IMR-90 (cell line): ENCODE measurements at regions of chr11 and their contacts with region 1.

Region 1: DNA sequence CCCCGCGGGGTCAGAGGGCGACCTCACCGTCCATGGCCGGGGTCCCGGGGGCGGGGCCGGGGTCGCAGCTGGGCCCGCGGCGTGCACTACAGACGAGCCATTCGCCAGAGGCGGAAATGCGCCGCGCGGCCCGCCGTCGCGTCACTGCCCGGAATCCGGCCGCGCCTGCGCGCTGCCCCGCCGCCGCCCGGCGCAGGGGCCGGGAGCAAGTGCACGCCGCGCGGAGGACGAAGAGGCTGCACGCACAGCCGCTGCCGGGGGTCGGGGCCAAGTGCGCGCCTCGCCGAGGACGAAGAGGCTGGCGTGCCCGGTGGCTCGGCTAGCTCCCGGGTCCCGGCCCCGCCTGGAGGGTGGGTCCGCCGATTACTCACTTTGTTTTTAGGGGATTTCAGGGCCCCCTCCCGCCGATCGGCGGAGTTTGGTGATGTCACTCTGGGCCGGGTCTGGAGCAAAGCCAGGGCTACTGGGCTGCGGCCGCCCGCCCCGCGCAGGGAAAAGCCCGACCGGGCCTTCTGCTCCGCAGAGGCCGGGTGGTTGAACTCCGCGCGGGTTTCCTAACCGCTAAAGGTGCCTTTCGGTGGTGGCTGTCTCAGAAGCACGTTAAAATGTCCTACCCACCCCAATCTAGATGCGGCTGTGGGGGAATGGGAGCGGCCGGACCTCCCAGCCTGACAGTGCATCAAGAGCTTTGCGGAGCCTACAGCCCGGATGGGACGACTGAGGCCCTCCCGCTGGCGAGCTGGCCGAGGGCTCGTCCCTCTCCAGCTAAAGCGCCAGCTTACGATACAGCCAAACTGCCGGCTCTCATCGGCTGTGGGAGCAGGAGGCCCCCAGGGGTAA is at the start of gene RELA:
- DNase-seq: peak; percentile 93
- ATAC-seq: peak; percentile 93
- H3K4me3 ChIP-seq: peak within 1 kb of the TSS; percentile 92
- H3K27ac ChIP-seq: peak within 1 kb of the TSS; percentile 91
- H3K4me1 ChIP-seq: peaks cover 7% of the 10 kb centered on the region
- H3K27me3 ChIP-seq: no peaks in the 10 kb centered on the region
- CTCF ChIP-seq: no peak
- POLR2A ChIP-seq: peak; percentile 83
- RAD21 ChIP-seq: no peak
- total RNA-seq, gene RELA: 8.6 and 8.9 TPM in 2 replicates

Region 2: GRCh38 chr11:65644006-65644405 is 19.0 kb before region 1 on chr11:
- CTCF ChIA-PET with region 1: no interaction called
- POLR2A ChIA-PET with region 1: no interaction called
- dilution Hi-C with region 1: no loop called
- in situ Hi-C with region 1: no loop called
- intact Hi-C with region 1: no loop called
- DNase-seq: no peak
- ATAC-seq: no peak
- H3K4me3 ChIP-seq: no peak overlapping the region
- H3K27ac ChIP-seq: no peak overlapping the region
- H3K4me1 ChIP-seq: peaks cover 8% of the 10 kb centered on the region
- H3K27me3 ChIP-seq: no peaks in the 10 kb centered on the region
- CTCF ChIP-seq: no peak
- POLR2A ChIP-seq: no peak
- RAD21 ChIP-seq: no peak

Region 3: GRCh38 chr11:66035653-66036333 is 372.8 kb after region 1 on chr11:
- CTCF ChIA-PET with region 1: no interaction called
- POLR2A ChIA-PET with region 1: interaction called, 17 read pairs
- dilution Hi-C with region 1: no loop called
- in situ Hi-C with region 1: no loop called
- intact Hi-C with region 1: no loop called
- DNase-seq: no peak
- ATAC-seq: no peak
- H3K4me3 ChIP-seq: no peak overlapping the region
- H3K27ac ChIP-seq: no peak overlapping the region
- H3K4me1 ChIP-seq: no peaks in the 10 kb centered on the region; the same call in 1 of the 2 replicates
- H3K27me3 ChIP-seq: peaks cover 15% of the 10 kb centered on the region
- CTCF ChIP-seq: no peak
- POLR2A ChIP-seq: no peak
- RAD21 ChIP-seq: no peak